Heart right ventricle (tissue), 16 donors: ENCODE measurements at regions of chr9 and their contacts with region 1.

Region 1: DNA sequence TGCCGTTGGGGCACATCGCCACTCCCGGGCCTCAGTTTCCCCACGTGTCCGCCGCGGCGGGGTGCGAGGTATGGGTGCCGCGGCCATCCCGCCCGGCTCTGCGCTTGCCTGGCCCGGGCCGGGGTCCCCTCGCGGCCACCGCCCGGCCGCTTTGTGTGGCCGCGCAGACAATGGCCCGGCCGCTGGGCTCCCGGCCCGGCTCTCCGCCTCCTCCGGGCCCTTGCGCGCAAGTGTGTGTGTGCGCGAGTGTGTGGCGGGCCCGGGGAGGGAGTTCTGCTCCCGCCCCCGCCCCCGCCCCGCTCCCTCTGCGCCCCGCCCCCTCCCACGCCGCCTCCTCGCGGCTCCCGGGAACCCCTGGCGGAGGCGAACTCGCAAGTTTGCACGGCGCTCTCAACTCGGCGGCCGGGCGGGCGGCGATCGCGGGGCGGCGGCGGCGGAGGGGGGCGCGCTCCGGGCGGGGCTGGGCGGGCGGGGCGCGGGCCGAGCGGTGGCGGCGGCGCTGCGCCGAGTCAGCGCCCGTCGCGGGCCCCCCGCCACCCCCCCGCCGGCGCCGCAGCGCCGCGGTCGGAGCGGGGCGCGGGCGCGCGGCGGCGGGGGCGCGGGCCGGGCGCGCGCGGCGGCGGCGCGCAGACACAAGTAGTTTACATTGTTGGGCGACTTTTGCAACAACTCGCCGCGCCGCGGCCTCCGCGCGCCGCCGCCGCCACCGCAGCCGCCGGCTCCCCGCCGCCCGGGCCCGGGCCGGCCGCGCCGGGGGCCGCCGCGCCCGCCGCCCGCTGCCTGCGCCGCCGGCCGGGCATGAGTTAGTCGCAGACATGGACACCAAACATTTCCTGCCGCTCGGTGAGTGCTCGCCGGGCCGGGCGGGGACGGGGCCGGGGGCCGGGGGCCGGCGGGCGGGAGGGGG is at the start of gene RXRA:
- DNase-seq: peak; percentile 86 to 89
- ATAC-seq: peak; percentile 54 to 74 (median 64)
- H3K4me3 ChIP-seq: peak within 1 kb of the TSS; percentile 70 to 96 (median 86)
- H3K27ac ChIP-seq: peak within 1 kb of the TSS; percentile 90 to 99 (median 98)
- H3K4me1 ChIP-seq: peaks cover 33 to 68% (median 58%) of the 10 kb centered on the region in 9 donors
- H3K27me3 ChIP-seq: no peaks in the 10 kb centered on the region
- CTCF ChIP-seq: peak in 5 of 9 donors; percentile 26 to 49 (median 43)
- total RNA-seq, gene RXRA: 38.4 to 92.3 (median 43.6) TPM

Region 2: GRCh38 chr9:134163353-134164196 is 162.5 kb before region 1 on chr9:
- intact Hi-C with region 1: loop called in 2 of 10 experiments (anchors 2 kb)
- DNase-seq: peak; percentile 57 to 74
- ATAC-seq: peak in 4 of 8 donors; percentile 8 to 36 (median 22)
- H3K4me3 ChIP-seq: peak overlapping the region in 1 of 10 donors; percentile 42
- H3K27ac ChIP-seq: peak overlapping the region in 1 of 10 donors; percentile 79
- H3K4me1 ChIP-seq: peaks cover 0 to 24% (median 10%) of the 10 kb centered on the region in 9 donors
- H3K27me3 ChIP-seq: no peaks in the 10 kb centered on the region
- CTCF ChIP-seq: peak in 8 of 9 donors; percentile 18 to 53 (median 46)

Region 3: GRCh38 chr9:134178768-134179551 is 147.1 kb before region 1 on chr9:
- intact Hi-C with region 1: loop called in 7 of 10 experiments (anchors 5 to 10 kb)
- DNase-seq: peak in 1 of 2 donors; percentile 57
- ATAC-seq: peak; percentile 5 to 71 (median 46)
- H3K4me3 ChIP-seq: no peak overlapping the region
- H3K27ac ChIP-seq: peak overlapping the region in 1 of 10 donors; percentile 10
- H3K4me1 ChIP-seq: peaks cover 0 to 40% (median 27%) of the 10 kb centered on the region in 9 donors
- H3K27me3 ChIP-seq: peaks cover 0 to 38% (median 24%) of the 10 kb centered on the region in 7 donors
- CTCF ChIP-seq: no peak

Region 4: DNA sequence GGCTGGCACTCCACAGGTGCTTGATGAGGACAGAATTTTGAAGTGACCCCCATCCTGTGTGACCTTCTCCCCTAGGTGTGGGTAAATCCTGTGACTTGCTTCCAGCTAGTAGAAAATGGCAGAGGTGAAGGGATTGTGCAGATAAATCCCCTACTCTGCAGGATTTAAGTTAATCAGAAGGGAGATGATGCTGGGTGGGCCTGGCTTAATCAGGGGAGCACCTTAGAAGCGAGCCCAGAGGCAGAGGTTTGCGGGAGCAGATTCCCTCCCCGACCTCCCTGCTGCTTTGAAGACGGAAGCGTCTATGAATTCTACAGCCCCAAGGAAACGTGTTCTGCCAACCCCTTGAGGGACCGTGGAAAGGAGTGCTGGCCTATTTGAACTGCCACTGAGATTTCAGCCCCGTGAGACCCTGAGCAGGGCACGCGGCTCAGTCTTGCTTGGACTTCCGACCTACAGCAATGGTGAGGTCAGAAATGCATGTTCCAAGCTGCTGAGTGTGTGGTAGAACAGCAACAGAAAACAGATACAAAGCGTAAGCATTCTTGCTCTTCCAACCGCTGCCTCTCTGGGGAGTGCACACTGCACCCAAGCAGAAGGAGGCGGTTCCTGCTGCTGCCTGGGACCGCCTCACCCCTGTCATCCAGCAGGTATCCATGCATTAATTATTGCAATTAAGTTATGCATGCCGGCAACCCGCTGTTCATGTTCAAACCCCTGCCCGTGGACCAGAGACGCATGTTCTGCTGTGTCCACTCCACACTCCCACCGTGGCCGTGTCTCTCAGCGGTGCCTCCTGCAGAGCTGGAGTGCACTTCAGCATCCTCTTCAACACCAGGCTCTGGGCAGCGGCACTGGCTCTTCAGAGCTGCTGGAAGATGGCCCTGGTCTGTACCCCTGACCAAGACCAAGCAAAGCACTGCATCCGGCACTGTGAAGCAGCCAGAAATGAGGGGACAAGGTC is 54.5 kb before region 1 on chr9:
- intact Hi-C with region 1: no loop called
- DNase-seq: no peak
- ATAC-seq: no peak
- H3K4me3 ChIP-seq: no peak overlapping the region
- H3K27ac ChIP-seq: no peak overlapping the region
- H3K4me1 ChIP-seq: peaks cover 0 to 18% (median 13%) of the 10 kb centered on the region in 9 donors
- H3K27me3 ChIP-seq: peaks cover 0 to 21% (median 0%) of the 10 kb centered on the region in 7 donors
- CTCF ChIP-seq: no peak

Region 5: GRCh38 chr9:134378901-134379338 is 52.9 kb after region 1 on chr9:
- intact Hi-C with region 1: loop called in 3 of 10 experiments (anchors 5 kb)
- DNase-seq: peak; percentile 51 to 68
- ATAC-seq: peak; percentile 7 to 54 (median 31)
- H3K4me3 ChIP-seq: peak overlapping the region in 1 of 10 donors; percentile 8
- H3K27ac ChIP-seq: peak overlapping the region; percentile 0 to 98 (median 86)
- H3K4me1 ChIP-seq: peaks cover 77 to 100% (median 100%) of the 10 kb centered on the region in 9 donors
- H3K27me3 ChIP-seq: no peaks in the 10 kb centered on the region
- CTCF ChIP-seq: no peak

Region 6: GRCh38 chr9:134434894-134435506 is 108.9 kb after region 1 on chr9:
- intact Hi-C with region 1: loop called in 9 of 10 experiments (anchors 2 to 10 kb)
- DNase-seq: peak; percentile 92 to 97
- ATAC-seq: peak; percentile 76 to 92 (median 88)
- H3K4me3 ChIP-seq: peak overlapping the region in 5 of 10 donors; percentile 8 to 28 (median 12)
- H3K27ac ChIP-seq: peak overlapping the region; percentile 65 to 90 (median 82)
- H3K4me1 ChIP-seq: peaks cover 42 to 90% (median 83%) of the 10 kb centered on the region in 9 donors
- H3K27me3 ChIP-seq: no peaks in the 10 kb centered on the region
- CTCF ChIP-seq: no peak